Cardiac septum (tissue), 1 donor: ENCODE measurements at regions of chr16 and their contacts with region 1.

Region 1: GRCh38 chr16:4734063-4734729 is at the starts of genes ANKS3 and DNAAF8:
- DNase-seq: peak; percentile 97
- total RNA-seq, gene ANKS3: 9.9 TPM
- total RNA-seq, gene DNAAF8: 0.65 TPM

Region 2: GRCh38 chr16:4500272-4500671 is 233.9 kb before region 1 on chr16:
- intact Hi-C with region 1: no loop called
- DNase-seq: no peak

Region 3: GRCh38 chr16:4752351-4753100 is 18.3 kb after region 1 on chr16:
- intact Hi-C with region 1: no loop called
- DNase-seq: no peak

Region 4: DNA sequence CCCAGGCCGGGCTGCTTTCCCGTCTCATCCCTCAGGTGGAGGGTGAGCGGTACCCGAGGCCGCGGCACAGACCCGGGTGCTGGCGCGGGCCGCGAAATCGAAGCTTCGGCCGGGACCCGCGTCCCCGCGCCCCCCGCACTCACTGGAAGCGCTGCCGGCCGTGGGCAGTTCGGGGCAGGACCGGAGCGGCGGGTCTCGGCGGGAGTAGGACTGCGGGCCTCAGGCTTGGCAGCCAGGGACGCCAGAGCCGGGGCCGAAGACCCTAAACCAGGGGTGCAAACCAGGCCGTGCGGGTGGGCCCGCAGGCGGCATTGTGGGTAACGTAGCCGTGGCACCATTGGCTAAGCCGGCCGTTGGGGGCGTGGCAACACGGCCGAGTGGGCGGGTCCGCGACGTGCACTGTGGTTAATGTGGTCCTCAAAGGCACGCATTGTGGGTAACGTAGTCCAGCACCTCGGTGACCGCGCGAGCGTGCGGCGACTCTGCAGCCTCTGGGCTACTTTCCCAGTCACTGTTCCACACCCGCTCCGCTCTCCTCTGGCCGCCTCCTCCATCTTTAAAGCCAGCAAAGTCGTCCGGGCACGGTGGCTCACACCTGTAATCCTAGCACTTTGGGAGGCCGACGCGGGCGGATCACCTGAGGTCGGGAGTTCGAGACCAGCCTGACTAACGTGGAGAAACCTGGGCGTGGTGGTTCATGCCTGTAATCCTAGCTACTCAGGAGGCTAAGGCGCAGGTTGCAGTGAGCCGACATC is 32.9 kb after region 1 on chr16 and contains the start of gene ZNF500:
- intact Hi-C with region 1: loop called (anchors 2 kb)
- DNase-seq: peak; percentile 99
- total RNA-seq, gene ZNF500: 7.2 TPM